ENCODE measurements at regions of chr7 and their contacts with region 1.

Region 1: DNA sequence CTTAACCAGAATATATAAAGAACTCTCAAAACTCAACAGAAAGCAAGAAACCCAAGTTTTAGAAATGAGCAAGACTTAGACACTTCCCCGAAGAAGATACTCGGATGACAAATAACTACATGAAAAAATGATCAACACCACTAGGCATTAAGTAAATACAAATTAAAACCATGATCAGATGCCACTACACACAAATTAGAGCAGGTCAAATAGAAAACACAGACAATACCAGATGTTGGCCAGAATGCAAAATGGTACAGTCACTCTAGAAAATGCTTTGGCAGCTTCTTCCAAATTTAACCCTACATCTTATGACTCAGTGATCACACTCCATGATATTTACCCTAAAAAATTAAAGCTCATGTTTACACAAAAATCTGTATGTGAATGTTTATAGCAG is 18.4 kb downstream of the TMEM176A start:
- DNase-seq: no peak
- ATAC-seq: no peak
- H3K4me3 ChIP-seq: no peak overlapping the region
- H3K27ac ChIP-seq: no peak overlapping the region
- H3K4me1 ChIP-seq: no peaks in the 10 kb centered on the region
- H3K27me3 ChIP-seq: no peaks in the 10 kb centered on the region; a peak in 1 of 4 replicates
- CTCF ChIP-seq: no peak
- EP300 ChIP-seq: no peak
- POLR2A ChIP-seq: no peak
- RAD21 ChIP-seq: no peak

Region 2: DNA sequence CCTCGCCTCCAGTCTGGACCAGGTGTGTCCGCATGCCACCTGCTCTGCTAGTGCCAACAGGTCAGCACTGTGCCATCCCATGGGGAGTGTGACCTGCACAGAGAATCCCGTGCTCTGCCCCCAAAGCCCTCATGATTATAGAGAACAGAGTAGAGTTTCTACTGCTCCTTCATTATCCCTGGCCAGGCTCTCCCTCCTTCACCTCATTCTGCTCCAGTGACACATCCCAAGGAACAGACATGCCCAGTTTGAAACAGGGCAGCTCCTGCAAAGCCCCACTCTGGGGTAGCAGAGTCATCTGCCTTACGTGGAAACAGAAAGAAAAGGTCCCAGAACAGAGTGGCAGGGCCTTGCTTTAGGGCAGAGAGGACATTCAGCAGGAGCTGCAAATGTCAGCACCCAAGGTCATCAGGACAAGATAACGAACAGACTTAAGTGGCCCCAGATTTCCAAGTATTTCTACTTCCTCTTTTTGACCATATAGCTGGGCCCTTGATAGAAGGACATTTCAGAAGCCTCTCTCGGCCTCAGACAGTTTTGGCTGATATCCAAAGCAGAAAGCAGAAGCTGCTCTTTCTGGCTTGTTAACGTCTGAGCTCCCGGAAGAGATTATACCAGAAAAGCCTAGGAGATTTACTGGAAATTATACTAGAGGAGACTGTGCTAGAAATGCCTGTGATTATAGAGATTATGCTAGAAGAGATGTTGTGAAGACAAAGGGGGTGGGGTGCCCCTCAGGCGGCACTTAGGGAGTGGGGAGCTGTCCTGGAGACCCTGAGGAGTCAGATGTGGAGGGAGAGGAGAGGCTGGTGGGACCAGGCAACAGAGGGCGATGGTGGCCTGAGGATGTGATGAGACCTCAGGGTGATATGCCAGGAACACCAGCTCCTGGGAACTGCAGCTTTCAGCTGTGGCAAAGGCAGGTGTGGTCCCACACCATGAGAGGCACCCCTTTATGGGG is 31.4 kb before region 1 on chr7:
- CTCF ChIA-PET with region 1: interaction called, 4 read pairs
- POLR2A ChIA-PET with region 1: no interaction called
- RAD21 ChIA-PET with region 1: interaction called, 4 read pairs
- SMC1A ChIA-PET with region 1: interaction called, 11 read pairs
- in situ Hi-C with region 1: no loop called
- intact Hi-C with region 1: no loop called
- DNase-seq: peak; percentile 30
- ATAC-seq: peak; percentile 59
- H3K4me3 ChIP-seq: no peak overlapping the region
- H3K27ac ChIP-seq: no peak overlapping the region
- H3K4me1 ChIP-seq: peaks cover 17% of the 10 kb centered on the region
- H3K27me3 ChIP-seq: peaks cover 0 to 2% of the 10 kb centered on the region in 2 experiments; a peak in 1 of 4 replicates
- CTCF ChIP-seq: no peak
- EP300 ChIP-seq: no peak
- POLR2A ChIP-seq: no peak
- RAD21 ChIP-seq: no peak

Region 3: GRCh38 chr7:150992833-150993302 is 173.9 kb after region 1 on chr7:
- CTCF ChIA-PET with region 1: no interaction called
- POLR2A ChIA-PET with region 1: no interaction called
- RAD21 ChIA-PET with region 1: no interaction called
- SMC1A ChIA-PET with region 1: no interaction called
- in situ Hi-C with region 1: no loop called
- intact Hi-C with region 1: no loop called
- DNase-seq: no peak
- ATAC-seq: peak; percentile 83
- H3K4me3 ChIP-seq: no peak overlapping the region
- H3K27ac ChIP-seq: no peak overlapping the region
- H3K4me1 ChIP-seq: no peaks in the 10 kb centered on the region; the same call in 1 of the 2 replicates
- H3K27me3 ChIP-seq: peaks cover 0 to 1% of the 10 kb centered on the region in 2 experiments; a peak in 1 of 4 replicates
- CTCF ChIP-seq: no peak
- EP300 ChIP-seq: no peak
- POLR2A ChIP-seq: no peak
- RAD21 ChIP-seq: no peak